ENCODE measurements at regions of chr12 and their contacts with region 1.

Region 1: GRCh38 chr12:120961604-120962531 is 16.5 kb upstream of the HNF1A start:
- DNase-seq: peak; percentile 80
- H3K4me3 Mint-ChIP-seq: no peak overlapping the region
- H3K27ac Mint-ChIP-seq: peak overlapping the region; percentile 82
- H3K4me1 Mint-ChIP-seq: peaks cover 62% of the 10 kb centered on the region
- H3K27me3 Mint-ChIP-seq: no peaks in the 10 kb centered on the region
- CTCF ChIP-seq: no peak

Region 2: GRCh38 chr12:120856980-120857379 is 104.9 kb before region 1 on chr12:
- CTCF ChIA-PET with region 1: interaction called, 9 read pairs
- intact Hi-C with region 1: loop called (anchors 5 kb)
- DNase-seq: peak; percentile 45
- H3K4me3 Mint-ChIP-seq: no peak overlapping the region
- H3K27ac Mint-ChIP-seq: peak overlapping the region; percentile 51
- H3K4me1 Mint-ChIP-seq: peaks cover 27% of the 10 kb centered on the region
- H3K27me3 Mint-ChIP-seq: no peaks in the 10 kb centered on the region
- CTCF ChIP-seq: peak; percentile 45

Region 3: DNA sequence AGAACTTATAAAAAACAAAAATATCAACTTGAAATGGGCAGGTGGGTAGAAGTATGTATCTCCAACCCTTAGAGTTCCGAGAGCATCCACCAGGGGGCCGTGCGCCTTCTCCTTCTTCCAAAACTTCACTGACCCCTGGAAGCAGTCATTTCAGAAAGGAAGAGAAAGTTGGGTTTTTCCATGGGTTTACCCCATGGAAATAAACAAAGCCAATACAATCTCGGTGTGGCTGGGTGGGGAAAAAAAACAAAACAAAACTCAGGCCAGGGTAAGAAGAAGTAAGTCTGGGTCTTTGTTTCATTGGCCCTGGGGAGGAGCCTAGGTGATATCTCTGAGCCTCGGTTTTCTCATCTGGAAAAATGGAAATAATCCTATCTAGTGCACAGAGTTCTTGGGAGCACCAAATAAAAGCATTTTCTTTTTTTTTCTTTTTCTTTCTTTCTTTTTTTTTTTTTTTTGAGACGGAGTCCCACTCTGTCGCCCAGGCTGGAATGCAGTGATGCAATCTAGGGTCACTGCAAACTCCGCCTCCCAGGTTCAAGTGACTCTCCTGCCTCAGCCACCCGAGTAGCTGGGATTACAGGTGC is 17.1 kb before region 1 on chr12:
- CTCF ChIA-PET with region 1: interaction called, 13 read pairs
- intact Hi-C with region 1: loop called (anchors 2 kb)
- DNase-seq: peak; percentile 87
- H3K4me3 Mint-ChIP-seq: no peak overlapping the region
- H3K27ac Mint-ChIP-seq: peak overlapping the region; percentile 73
- H3K4me1 Mint-ChIP-seq: peaks cover 8% of the 10 kb centered on the region
- H3K27me3 Mint-ChIP-seq: peaks cover 10% of the 10 kb centered on the region
- CTCF ChIP-seq: peak; percentile 79

Region 4: DNA sequence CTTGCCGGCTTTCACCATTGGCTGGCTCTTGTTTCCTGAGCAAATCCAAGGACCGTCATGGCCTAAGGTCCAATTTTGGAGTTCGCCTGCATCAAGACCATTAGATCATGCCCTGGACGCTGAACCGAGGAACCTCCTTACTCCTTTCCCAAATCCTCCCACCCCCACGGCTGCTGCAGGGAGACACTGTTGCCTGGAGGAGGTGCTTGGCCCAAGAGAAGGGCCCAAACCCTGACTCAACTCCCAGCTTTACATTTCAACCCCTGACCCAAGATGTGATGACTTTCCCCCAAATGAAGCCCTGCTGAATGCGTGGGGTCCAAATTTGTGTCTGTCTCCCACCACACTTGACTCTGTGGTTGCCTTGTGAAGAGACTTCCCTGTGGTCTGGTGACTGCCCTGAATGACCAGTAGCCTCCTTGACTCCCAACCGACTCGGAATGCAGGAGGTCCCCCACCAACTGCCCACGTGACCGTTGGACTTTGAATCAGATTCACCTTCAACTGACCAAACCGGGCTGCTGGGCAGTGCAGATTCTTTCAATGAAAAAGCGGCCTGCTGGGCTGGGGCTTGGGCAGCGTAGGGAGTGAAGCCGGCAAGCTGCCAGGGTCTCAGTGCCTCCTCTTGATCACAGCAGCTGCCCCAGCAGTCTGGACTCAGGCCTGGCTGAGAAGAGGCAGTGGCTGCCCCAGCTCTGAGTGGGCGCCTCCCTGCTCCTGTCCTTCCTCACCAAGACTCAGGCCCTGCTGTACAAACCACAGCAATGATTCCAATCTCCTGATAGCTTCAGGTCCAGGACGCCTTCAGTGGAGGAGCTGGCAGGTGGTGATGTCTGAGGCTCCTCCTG is 123.9 kb after region 1 on chr12:
- CTCF ChIA-PET with region 1: no interaction called
- intact Hi-C with region 1: no loop called
- DNase-seq: no peak
- H3K4me3 Mint-ChIP-seq: no peak overlapping the region
- H3K27ac Mint-ChIP-seq: no peak overlapping the region
- H3K4me1 Mint-ChIP-seq: no peaks in the 10 kb centered on the region
- H3K27me3 Mint-ChIP-seq: peaks cover 46% of the 10 kb centered on the region
- CTCF ChIP-seq: no peak

Region 5: DNA sequence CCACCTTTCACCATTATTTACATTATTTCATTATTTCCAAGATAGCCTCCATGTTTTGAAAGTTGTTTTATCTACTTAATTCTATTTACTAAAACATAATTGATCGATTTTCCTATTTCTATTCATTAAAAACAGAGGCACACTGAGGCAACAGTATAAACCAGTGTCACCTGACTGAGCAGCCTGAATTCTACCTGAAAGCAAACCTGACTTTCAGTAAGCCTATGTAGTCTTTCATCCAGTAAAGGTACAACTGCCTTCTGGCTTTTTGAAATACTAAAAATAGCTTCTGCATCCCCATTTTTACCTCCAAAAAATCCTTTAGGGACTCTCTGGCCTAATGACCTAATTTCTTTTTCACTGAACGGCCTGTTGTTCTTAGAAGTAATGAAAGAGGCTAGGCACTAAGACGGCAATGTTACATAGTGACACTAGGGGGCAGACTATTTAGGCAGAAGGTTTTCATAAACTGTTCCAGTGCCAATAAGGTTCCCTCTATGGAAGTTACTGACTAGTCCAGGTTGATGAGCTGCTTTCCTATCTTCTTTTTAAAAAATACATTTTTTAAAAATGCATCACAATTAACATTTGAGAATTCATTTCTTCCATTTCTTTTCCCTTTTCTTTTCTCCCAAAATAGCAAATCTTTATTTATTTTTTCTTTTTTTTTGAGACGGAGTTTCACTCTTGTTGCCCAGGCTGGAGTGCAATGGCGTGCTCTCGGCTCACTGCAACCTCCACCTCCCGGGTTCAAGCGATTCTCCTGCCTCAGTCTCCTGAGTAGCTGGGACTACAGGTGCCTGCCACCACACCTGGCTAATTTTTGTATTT is 372.9 kb after region 1 on chr12:
- CTCF ChIA-PET with region 1: no interaction called
- intact Hi-C with region 1: no loop called
- DNase-seq: peak; percentile 37
- H3K4me3 Mint-ChIP-seq: no peak overlapping the region
- H3K27ac Mint-ChIP-seq: no peak overlapping the region
- H3K4me1 Mint-ChIP-seq: peaks cover 21% of the 10 kb centered on the region
- H3K27me3 Mint-ChIP-seq: no peaks in the 10 kb centered on the region
- CTCF ChIP-seq: peak; percentile 59

Measured in Calu3 (cell line).